ENCODE measurements at regions of chrX and their contacts with region 1.

Region 1: DNA sequence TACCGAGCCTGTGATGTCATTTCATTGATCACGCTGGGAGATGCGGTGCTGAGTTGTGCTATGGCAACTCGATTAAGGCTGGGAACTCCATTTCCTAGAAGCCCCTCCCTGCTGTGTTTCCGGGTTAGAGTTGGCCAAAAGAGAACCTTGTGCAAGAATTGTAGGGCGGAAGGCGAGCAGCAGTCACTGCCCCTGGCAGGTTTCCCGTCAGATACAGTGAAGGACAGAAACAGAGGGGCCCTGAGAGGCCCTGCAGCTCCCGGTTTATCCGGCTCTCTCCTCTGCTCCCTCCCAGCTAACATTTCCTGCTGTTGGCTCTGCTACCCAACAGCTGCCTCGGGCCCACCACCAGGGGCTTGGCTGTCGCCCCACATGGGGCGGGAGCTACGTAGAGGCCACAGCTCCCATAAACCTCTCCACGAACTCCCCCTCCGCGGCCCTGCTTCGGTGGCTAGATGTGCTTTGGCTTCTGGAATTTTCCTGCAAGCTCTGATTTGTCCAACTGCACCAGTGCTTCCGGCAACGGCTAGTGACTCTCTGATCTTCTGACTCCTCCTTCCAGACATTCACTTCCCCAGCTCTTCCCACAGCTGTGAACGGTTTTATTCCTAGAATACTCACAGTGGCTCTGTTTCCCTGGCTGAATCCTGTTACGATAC is 74.9 kb upstream of the USP9X start:
- DNase-seq: peak; percentile 26 to 72
- ATAC-seq: peak; percentile 87 to 91 (median 89)
- H3K4me3 ChIP-seq: peak overlapping the region; percentile 37
- H3K4me3 Mint-ChIP-seq: peak overlapping the region; percentile 64
- H3K27ac ChIP-seq: peak overlapping the region; percentile 69
- H3K27ac Mint-ChIP-seq: peak overlapping the region; percentile 56 to 91
- H3K4me1 ChIP-seq: peaks cover 12% of the 10 kb centered on the region
- H3K4me1 Mint-ChIP-seq: peaks cover 6 to 14% of the 10 kb centered on the region in 2 donors
- H3K27me3 ChIP-seq: no peaks in the 10 kb centered on the region
- H3K27me3 Mint-ChIP-seq: peaks cover 0 to 14% of the 10 kb centered on the region in 2 donors
- CTCF ChIP-seq: no peak

Region 2: GRCh38 chrX:41027431-41027831 is 17.1 kb after region 1 on chrX:
- intact Hi-C with region 1: no loop called
- DNase-seq: no peak
- ATAC-seq: no peak
- H3K4me3 ChIP-seq: no peak overlapping the region
- H3K4me3 Mint-ChIP-seq: no peak overlapping the region
- H3K27ac ChIP-seq: no peak overlapping the region
- H3K27ac Mint-ChIP-seq: no peak overlapping the region
- H3K4me1 ChIP-seq: no peaks in the 10 kb centered on the region
- H3K4me1 Mint-ChIP-seq: no peaks in the 10 kb centered on the region
- H3K27me3 ChIP-seq: no peaks in the 10 kb centered on the region
- H3K27me3 Mint-ChIP-seq: peaks cover 0 to 35% of the 10 kb centered on the region in 2 donors
- CTCF ChIP-seq: no peak

Region 3: DNA sequence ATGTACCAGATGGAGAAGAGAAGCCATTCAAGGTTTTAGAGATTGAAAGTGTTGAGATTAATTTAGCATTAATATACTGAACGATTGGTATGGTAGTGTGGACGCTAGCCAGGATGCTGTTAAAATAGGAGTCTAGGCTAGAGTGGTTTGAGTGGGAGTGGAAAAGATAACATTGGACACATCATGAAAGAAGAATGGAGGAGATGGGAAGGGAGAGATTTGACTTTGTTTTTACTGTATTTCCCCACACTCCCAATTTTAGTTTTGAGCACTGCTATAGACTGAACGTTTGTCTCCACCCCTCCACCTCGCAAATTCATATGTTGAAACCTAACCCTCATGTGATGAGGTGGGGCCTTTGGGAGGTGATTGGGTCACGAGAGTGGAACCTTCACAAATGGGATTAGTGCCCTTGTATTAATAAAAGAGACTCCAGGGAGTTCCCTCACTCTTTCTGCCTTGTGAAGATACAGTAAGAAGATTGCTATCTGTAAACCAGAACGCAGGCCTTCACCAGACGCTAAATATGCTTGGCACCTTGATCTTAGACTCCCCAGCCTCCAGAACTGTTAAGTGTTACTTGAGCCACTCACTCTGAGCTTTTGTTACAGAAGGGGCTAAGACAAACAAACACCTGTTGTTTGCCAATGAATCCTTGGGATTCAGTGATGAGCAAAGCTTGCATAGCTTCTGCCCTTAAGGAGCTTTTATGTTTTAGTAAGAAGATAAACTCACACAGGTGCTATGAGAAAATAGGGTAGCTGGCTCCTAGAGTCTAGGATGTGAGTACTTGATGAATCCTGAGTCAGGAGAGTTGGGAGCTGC is 100.7 kb after region 1 on chrX:
- intact Hi-C with region 1: loop called (anchors 5 kb)
- DNase-seq: peak in 1 of 2 donors; percentile 32
- ATAC-seq: peak in 2 of 3 donors; percentile 47 to 49
- H3K4me3 ChIP-seq: no peak overlapping the region
- H3K4me3 Mint-ChIP-seq: peak overlapping the region; percentile 9
- H3K27ac ChIP-seq: no peak overlapping the region
- H3K27ac Mint-ChIP-seq: peak overlapping the region; percentile 9 to 76
- H3K4me1 ChIP-seq: peaks cover 8% of the 10 kb centered on the region
- H3K4me1 Mint-ChIP-seq: peaks cover 66 to 69% of the 10 kb centered on the region in 2 donors
- H3K27me3 ChIP-seq: no peaks in the 10 kb centered on the region
- H3K27me3 Mint-ChIP-seq: no peaks in the 10 kb centered on the region
- CTCF ChIP-seq: no peak

Measured in natural killer cell (primary cell).